Head of caudate nucleus (tissue), 42 donors: ENCODE measurements at regions of chr9 and their contacts with region 1.

Region 1: DNA sequence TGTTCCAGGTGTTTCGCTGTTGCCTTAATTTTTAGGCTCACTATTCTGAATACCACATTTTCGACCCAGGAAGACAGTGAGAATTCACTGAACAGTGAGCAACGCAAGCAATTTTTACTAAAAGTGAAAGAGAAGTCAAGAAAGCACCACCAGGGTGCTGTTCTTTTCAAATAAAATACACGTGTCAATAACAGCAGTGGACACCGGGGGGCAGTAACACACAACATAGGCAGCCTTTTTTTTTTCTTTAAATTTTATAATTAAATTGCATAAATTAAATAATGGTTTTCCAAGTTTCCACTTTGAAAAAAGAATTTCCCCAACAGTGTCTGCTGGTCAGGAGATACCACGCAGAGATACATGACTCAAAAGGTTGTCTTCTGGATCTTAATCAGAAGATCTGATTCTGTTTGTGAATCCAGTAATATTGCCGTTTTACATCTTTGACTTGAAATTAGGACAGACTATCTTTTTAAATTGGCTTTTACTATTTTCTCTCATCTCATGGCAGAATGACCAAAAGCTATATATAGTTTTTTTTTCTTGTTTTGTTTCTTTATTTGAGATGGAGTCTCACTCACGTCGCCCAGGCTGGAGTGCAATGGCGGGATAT is 47.1 kb upstream of the SH3GL2 start:
- DNase-seq: peak in 37 of 42 donors; percentile 12 to 76 (median 46)

Region 2: DNA sequence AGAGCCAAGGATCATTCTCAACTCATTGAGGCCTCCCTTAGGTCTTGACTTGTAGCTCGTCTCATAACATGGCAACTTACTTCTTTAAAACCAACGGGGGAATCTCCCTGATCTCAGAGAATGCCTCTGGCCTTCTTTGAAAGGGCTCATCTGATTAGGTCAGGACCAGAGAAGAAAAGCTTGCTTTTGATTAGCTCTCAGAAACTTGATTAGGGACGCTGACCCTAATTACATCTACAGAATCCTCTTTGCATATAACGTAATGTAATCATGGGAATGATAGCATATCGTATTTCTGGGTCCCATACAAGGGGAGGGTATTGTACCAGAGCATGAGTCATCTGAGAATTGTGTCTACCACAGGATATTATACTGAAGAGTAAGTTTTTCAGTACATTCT is 78.0 kb before region 1 on chr9:
- intact Hi-C with region 1: no loop called
- DNase-seq: no peak

Region 3: GRCh38 chr9:17793713-17794622 is 262.2 kb after region 1 on chr9:
- intact Hi-C with region 1: loop called (anchors 10 kb)
- DNase-seq: peak in 21 of 42 donors; percentile 8 to 70 (median 41)

Region 4: DNA sequence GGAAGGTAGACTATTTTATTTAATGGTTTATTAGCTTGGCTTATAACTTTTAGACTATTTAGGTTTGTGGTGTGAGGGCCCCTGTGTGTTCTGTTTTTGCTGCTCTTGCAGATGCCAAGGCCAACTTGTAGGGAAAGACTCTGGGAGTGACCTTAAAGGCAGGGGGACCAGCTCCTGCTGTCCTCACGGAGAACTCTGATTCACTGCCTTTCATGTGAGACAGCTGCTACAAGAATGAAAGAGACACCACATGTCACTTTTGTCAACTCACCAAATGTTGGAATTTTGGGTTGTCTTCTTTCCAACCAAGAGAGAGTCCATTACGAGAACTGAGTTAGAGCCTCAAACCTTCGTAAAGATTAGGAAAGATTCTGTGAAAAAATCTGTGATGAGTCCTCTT is 683.9 kb after region 1 on chr9:
- intact Hi-C with region 1: loop called (anchors 10 kb)
- DNase-seq: no peak